Colonic mucosa (tissue), 4 donors: ENCODE measurements at regions of chr14 and their contacts with region 1.

Region 1: GRCh38 chr14:65594153-65594881 is 181.8 kb downstream of the FUT8 start:
- DNase-seq: peak; percentile 73
- H3K4me3 ChIP-seq: no peak overlapping the region
- H3K27ac ChIP-seq: no peak overlapping the region
- H3K4me1 ChIP-seq: no peaks in the 10 kb centered on the region
- H3K27me3 ChIP-seq: no peaks in the 10 kb centered on the region
- CTCF ChIP-seq: no peak

Region 2: DNA sequence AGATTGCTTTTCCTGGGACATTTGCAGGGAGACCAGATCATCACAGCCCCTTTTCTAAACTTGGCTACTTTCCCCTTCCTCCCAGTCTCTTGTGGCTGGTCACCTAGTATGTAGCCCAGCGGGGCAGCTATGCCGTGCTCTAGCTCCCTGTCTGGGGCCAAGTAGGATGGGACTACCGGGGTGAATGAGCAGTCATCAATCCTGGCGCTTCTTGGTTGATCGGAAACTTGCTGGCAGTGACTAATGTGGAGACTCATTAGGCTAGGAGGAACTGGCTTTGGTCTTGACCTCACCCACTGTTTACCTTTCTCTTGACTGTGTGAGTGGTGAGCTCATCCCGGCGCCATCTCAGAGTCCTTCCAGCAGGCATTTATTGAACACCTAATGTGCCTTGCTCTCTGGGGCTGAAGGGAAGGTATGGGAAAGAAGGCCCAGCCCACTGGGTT is 874.2 kb before region 1 on chr14:
- intact Hi-C with region 1: no loop called
- DNase-seq: peak; percentile 82
- H3K4me3 ChIP-seq: no peak overlapping the region
- H3K27ac ChIP-seq: peak overlapping the region; percentile 92
- H3K4me1 ChIP-seq: peaks cover 63% of the 10 kb centered on the region
- H3K27me3 ChIP-seq: no peaks in the 10 kb centered on the region
- CTCF ChIP-seq: no peak

Region 3: GRCh38 chr14:65211341-65211987 is 382.9 kb before region 1 on chr14:
- intact Hi-C with region 1: loop called (anchors 10 kb)
- DNase-seq: no peak
- H3K4me3 ChIP-seq: no peak overlapping the region
- H3K27ac ChIP-seq: no peak overlapping the region
- H3K4me1 ChIP-seq: no peaks in the 10 kb centered on the region
- H3K27me3 ChIP-seq: no peaks in the 10 kb centered on the region
- CTCF ChIP-seq: no peak

Region 4: DNA sequence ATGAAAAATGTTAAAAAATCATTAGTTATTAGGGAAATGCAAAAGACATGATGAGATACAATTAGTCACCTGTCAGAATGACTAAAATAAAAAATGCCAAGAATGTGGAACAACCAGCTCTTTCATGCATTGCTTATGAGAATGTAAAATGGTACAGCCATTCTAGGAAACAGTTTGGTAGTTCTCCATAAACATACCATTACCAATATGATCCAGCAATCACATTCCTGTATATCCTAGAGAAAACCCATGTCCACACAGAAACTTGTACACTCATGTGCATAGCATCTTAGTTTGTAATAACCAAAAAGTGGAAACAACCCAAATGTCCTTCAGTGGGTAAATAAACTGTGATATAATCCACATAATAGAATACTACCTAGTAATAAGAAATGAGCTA is 63.9 kb after region 1 on chr14:
- intact Hi-C with region 1: no loop called
- DNase-seq: no peak
- H3K4me3 ChIP-seq: no peak overlapping the region
- H3K27ac ChIP-seq: no peak overlapping the region
- H3K4me1 ChIP-seq: no peaks in the 10 kb centered on the region
- H3K27me3 ChIP-seq: no peaks in the 10 kb centered on the region
- CTCF ChIP-seq: no peak